ENCODE measurements at regions of chr5 and their contacts with region 1.

Region 1: DNA sequence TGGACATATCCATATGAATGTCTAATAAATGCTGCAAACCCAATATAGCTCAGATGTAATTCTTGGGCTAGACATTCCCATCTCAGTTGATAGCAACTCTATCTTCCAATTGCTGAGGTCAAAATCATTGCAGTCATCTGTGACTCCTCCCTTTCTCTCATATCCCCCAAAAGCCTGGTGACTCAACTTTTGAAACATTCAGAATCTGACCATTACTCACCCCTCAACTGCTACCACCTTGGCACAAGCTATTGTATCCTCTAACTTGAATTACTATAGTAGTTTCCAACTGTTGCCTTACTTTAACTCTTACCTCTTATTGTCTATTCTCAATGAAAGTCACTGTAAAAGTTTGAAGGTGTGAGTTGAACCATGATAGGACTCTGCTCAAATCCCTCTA is 600.1 kb upstream of the RGMB start:
- DNase-seq: no peak
- H3K4me3 ChIP-seq: no peak overlapping the region
- H3K27ac ChIP-seq: no peak overlapping the region
- H3K4me1 ChIP-seq: no peaks in the 10 kb centered on the region
- H3K27me3 ChIP-seq: no peaks in the 10 kb centered on the region
- CTCF ChIP-seq: no peak
- POLR2A ChIP-seq: no peak

Region 2: DNA sequence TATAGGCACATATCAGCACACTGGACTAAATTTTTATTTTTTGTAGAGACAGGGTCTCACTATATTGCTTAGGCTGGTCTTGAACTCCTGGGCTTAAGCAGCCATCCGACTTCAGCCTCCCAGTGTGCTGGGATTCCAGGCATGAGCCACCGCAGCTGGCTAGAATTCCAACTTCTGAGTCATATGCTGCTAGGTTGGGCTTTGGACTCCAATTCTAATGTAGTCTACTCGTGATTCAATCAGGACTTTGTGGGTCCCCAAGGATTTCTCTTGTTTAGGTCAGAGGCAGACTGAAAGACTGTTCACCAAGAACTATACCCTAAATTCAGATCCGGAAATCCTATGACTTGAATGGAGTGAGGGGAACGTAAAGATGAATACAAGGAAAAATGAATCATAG is 823.7 kb after region 1 on chr5:
- intact Hi-C with region 1: loop called (anchors 5 kb)
- DNase-seq: no peak
- H3K4me3 ChIP-seq: no peak overlapping the region
- H3K27ac ChIP-seq: no peak overlapping the region
- H3K4me1 ChIP-seq: no peaks in the 10 kb centered on the region
- H3K27me3 ChIP-seq: no peaks in the 10 kb centered on the region
- CTCF ChIP-seq: no peak
- POLR2A ChIP-seq: no peak

Measured in breast epithelium (tissue), 4 donors.